ENCODE measurements at regions of chr13 and their contacts with region 1.

Region 1: GRCh38 chr13:97855570-97856303 is 97.7 kb upstream of the IPO5 start:
- DNase-seq: peak; percentile 55
- ATAC-seq: peak; percentile 94
- H3K4me3 ChIP-seq: peak overlapping the region in 2 of 3 experiments; percentile 39 to 58; a peak in 3 of 6 replicates
- H3K27ac ChIP-seq: no peak overlapping the region
- H3K4me1 ChIP-seq: peaks cover 22% of the 10 kb centered on the region
- H3K27me3 ChIP-seq: peaks cover 0 to 24% of the 10 kb centered on the region in 2 experiments; a peak in 3 of 5 replicates
- CTCF ChIP-seq: peak; percentile 88
- EP300 ChIP-seq: no peak
- POLR2A ChIP-seq: no peak
- RAD21 ChIP-seq: peak; percentile 83

Region 2: DNA sequence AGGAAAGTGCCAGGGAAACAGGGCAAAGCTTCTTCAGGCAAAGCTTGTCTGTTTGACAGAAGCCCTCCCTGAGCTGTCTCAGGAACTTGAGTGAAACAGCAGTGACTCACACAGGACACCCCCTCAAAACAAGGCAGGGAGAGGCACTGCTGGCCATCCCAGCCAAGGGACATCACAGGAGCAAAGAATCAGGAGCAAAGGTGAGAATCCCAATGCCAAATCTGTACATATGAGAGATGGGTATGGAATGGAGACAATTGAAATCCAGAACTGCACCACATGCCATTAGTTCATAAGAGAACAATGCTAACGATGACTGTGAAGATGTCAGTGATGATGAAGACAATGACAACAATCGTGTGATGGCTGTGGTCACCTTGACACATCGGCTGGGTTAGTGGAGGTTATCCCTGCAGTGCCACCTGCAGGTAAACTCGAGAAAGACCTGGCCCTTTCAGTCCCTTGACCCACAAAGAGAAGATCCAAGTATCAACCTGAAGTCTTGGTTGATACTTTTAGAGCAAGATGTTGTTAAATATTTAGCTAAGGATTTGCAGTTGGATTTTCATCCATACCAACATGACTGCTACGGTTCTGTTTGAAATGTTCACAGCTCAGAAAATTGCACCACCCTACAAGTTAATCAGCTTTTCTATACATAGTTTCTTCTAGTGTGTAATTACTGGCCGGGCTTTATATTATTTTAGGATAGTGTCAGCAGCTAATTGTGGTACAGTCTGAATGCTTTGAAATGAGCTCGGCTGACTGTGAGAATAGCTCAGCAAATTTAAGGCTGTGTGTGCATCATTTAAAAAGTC is 55.8 kb after region 1 on chr13:
- CTCF ChIA-PET with region 1: interaction called, 4 read pairs
- POLR2A ChIA-PET with region 1: no interaction called
- in situ Hi-C with region 1: no loop called
- intact Hi-C with region 1: loop called (anchors 5 kb)
- DNase-seq: peak; percentile 19
- ATAC-seq: peak; percentile 83
- H3K4me3 ChIP-seq: no peak overlapping the region
- H3K27ac ChIP-seq: no peak overlapping the region
- H3K4me1 ChIP-seq: no peaks in the 10 kb centered on the region
- H3K27me3 ChIP-seq: no peaks in the 10 kb centered on the region; a peak in 1 of 5 replicates
- CTCF ChIP-seq: peak; percentile 70
- EP300 ChIP-seq: no peak
- POLR2A ChIP-seq: no peak
- RAD21 ChIP-seq: no peak

Region 3: GRCh38 chr13:98098516-98098915 is 242.8 kb after region 1 on chr13:
- CTCF ChIA-PET with region 1: no interaction called
- POLR2A ChIA-PET with region 1: no interaction called
- in situ Hi-C with region 1: loop called (anchors 10 kb)
- intact Hi-C with region 1: loop called (anchors 10 kb)
- DNase-seq: no peak
- ATAC-seq: no peak
- H3K4me3 ChIP-seq: no peak overlapping the region
- H3K27ac ChIP-seq: no peak overlapping the region
- H3K4me1 ChIP-seq: peaks cover 24% of the 10 kb centered on the region
- H3K27me3 ChIP-seq: no peaks in the 10 kb centered on the region
- CTCF ChIP-seq: no peak
- EP300 ChIP-seq: no peak
- POLR2A ChIP-seq: no peak
- RAD21 ChIP-seq: no peak

Region 4: GRCh38 chr13:98222081-98222554 is 366.4 kb after region 1 on chr13:
- CTCF ChIA-PET with region 1: no interaction called
- POLR2A ChIA-PET with region 1: no interaction called
- in situ Hi-C with region 1: no loop called
- intact Hi-C with region 1: loop called (anchors 5 kb)
- DNase-seq: no peak
- ATAC-seq: no peak
- H3K4me3 ChIP-seq: no peak overlapping the region
- H3K27ac ChIP-seq: no peak overlapping the region
- H3K4me1 ChIP-seq: peaks cover 33% of the 10 kb centered on the region
- H3K27me3 ChIP-seq: no peaks in the 10 kb centered on the region
- CTCF ChIP-seq: no peak
- EP300 ChIP-seq: no peak
- POLR2A ChIP-seq: no peak
- RAD21 ChIP-seq: no peak

Region 5: DNA sequence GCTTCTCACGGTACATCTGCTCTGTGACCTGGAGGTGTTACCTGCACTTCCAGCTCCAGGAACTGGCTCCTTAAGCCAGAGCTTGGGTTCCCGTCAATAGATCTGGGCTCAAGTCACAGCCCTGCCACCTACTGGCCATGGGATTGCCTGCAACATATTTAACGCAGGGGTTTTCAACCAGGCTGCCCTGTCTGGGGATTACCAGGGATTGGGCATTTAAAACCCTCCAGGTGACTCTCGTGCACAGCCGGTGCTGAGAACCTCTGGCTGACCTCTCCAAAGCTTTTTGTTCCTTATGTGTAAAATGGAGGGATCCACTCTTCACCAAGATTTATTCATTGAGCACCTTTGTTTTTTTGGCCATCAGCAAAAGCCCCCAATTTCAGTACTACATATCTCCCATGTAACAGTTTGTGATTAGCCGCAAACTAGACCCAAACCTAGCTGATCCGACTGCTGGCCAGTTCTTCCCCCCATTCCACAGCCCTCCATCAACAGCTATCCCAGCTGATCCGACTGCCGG is 797.8 kb after region 1 on chr13:
- CTCF ChIA-PET with region 1: no interaction called
- POLR2A ChIA-PET with region 1: no interaction called
- in situ Hi-C with region 1: loop called (anchors 25 kb)
- intact Hi-C with region 1: no loop called
- DNase-seq: peak; percentile 63
- ATAC-seq: peak; percentile 93
- H3K4me3 ChIP-seq: no peak overlapping the region
- H3K27ac ChIP-seq: no peak overlapping the region
- H3K4me1 ChIP-seq: peaks cover 50% of the 10 kb centered on the region
- H3K27me3 ChIP-seq: peaks cover 0 to 3% of the 10 kb centered on the region in 2 experiments; a peak in 2 of 5 replicates
- CTCF ChIP-seq: peak; percentile 91
- EP300 ChIP-seq: no peak
- POLR2A ChIP-seq: no peak
- RAD21 ChIP-seq: peak; percentile 82

Region 6: DNA sequence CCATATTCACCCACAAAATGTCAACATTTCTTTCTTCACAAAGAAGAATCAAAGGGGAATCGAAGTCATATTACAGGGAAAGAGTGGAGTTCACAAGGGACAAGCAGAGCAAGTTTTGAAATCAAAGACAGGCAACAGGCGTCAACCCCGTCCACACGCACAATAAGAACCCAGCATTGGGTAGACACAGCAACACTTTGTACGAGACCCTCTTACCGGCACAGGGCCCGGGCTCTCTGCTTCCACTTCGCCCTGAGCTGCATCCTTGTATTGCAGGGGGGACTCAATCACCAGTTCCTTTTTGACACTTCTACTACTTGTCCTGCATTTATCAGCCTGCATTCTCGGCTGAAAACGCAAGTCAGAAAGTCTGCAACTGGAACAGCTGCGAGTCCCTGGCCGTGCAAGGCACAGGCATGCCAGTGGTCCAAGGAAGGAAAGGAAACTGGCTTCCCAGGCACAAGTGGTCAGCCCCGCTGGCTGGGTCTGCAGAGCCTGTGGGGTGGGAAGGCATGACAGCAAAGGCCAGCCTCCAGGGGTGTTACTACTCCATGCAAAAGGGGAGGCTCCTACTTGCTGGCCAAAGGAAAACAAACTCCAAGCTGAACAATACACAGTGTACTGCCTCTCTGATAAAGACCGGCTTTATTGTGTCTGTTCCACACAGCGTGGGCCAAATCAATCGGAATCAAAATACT is 1122.0 kb after region 1 on chr13 and contains the start of gene DOCK9:
- CTCF ChIA-PET with region 1: no interaction called
- POLR2A ChIA-PET with region 1: no interaction called
- in situ Hi-C with region 1: no loop called
- intact Hi-C with region 1: no loop called
- DNase-seq: no peak
- ATAC-seq: peak; percentile 92
- H3K4me3 ChIP-seq: peak within 1 kb of the TSS in 1 of 3 experiments; percentile 15; a peak in 1 of 6 replicates
- H3K27ac ChIP-seq: no peak within 1 kb of the TSS
- H3K4me1 ChIP-seq: peaks cover 10% of the 10 kb centered on the region; the same call in 1 of the 2 replicates
- H3K27me3 ChIP-seq: peaks cover 0 to 1% of the 10 kb centered on the region in 2 experiments; a peak in 2 of 5 replicates
- CTCF ChIP-seq: no peak
- EP300 ChIP-seq: no peak
- POLR2A ChIP-seq: no peak
- RAD21 ChIP-seq: no peak
- total RNA-seq, gene DOCK9: 0.97 and 2.0 TPM in 2 replicates